Naive thymus-derived CD4-positive, alpha-beta T cell (primary cell): ENCODE measurements at regions of chr18 and their contacts with region 1.

Region 1: DNA sequence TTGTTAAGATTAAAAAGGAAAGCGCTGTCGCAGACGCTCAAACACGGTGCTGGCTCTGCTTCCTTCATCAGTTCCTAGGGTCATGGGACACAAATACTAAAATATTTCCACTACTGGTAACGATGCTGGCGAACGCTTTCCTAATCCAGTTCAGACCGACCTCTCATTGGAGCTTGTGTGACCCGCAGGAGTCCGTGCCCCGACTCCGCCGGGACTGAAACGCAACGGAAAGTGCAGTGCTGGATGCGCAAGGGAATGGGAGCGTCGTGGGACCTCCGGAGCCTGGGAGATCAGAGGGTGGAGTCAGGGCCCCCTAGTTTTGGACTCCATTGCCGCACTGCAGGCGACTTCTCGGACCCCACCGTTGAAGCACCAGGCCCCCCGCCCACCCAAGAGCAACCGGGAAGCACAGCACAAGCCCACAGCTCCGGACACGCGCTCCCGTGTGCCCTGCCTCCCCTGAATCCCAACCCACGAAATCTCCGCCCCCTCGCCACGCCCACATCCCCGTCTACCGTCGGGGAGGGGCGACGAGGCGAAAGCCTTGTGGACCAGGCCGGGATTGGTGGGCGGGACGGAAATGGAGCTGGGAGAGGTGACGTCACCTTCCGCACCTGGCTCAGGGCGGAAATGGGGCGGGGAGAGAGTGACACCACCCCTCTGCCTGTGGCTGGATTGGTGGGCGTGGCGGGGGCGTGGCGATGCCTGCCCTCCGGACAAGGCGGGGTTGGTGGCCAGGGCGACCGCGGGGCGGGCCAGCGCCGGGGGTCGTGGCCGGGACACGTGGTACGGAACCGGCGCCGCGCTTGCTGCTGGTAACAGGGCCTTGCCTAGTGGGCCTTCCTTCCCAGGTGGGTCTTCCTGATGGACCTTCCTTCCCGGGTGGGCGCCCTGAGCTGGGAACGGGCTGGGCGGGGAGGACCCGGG is at the start of gene CNDP2:
- DNase-seq: peak; percentile 93 to 100 (median 94)
- ATAC-seq: peak; percentile 89
- H3K4me3 ChIP-seq: peak within 1 kb of the TSS; percentile 75
- H3K4me3 Mint-ChIP-seq: peak within 1 kb of the TSS; percentile 79 to 98 (median 92)
- H3K27ac ChIP-seq: peak within 1 kb of the TSS; percentile 93
- H3K27ac Mint-ChIP-seq: peak within 1 kb of the TSS; percentile 95 to 100 (median 98)
- H3K4me1 ChIP-seq: peaks cover 33 to 43% of the 10 kb centered on the region in 2 donors
- H3K4me1 Mint-ChIP-seq: peaks cover 21 to 62% (median 49%) of the 10 kb centered on the region in 7 donors
- H3K27me3 ChIP-seq: no peaks in the 10 kb centered on the region
- H3K27me3 Mint-ChIP-seq: peaks cover 0 to 20% (median 0%) of the 10 kb centered on the region in 5 donors
- total RNA-seq, gene CNDP2: 112 to 169 (median 148) TPM

Region 2: DNA sequence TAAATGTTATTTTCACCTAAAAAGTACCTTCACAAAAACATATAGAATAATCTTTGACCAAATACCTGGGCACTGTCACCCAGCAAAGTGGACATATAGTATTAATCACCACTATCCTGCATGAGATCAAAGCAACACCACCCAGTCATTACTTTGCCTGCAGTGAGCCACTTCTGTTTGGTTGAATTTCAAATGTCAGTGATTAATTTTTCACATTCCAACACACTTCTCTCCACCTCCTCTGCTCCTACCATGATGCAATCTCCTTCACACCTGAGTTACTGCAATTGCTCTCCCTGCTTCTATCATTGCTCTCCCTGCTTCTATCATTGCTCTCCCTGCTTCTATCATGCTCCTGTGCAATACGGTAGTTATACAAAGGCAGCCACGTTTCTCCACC is 1522.0 kb before region 1 on chr18:
- CTCF ChIA-PET with region 1: no interaction called
- POLR2A ChIA-PET with region 1: no interaction called
- intact Hi-C with region 1: no loop called
- DNase-seq: no peak
- ATAC-seq: no peak
- H3K4me3 ChIP-seq: no peak overlapping the region
- H3K4me3 Mint-ChIP-seq: no peak overlapping the region
- H3K27ac ChIP-seq: no peak overlapping the region
- H3K27ac Mint-ChIP-seq: no peak overlapping the region
- H3K4me1 ChIP-seq: no peaks in the 10 kb centered on the region
- H3K4me1 Mint-ChIP-seq: no peaks in the 10 kb centered on the region
- H3K27me3 ChIP-seq: no peaks in the 10 kb centered on the region
- H3K27me3 Mint-ChIP-seq: no peaks in the 10 kb centered on the region

Region 3: DNA sequence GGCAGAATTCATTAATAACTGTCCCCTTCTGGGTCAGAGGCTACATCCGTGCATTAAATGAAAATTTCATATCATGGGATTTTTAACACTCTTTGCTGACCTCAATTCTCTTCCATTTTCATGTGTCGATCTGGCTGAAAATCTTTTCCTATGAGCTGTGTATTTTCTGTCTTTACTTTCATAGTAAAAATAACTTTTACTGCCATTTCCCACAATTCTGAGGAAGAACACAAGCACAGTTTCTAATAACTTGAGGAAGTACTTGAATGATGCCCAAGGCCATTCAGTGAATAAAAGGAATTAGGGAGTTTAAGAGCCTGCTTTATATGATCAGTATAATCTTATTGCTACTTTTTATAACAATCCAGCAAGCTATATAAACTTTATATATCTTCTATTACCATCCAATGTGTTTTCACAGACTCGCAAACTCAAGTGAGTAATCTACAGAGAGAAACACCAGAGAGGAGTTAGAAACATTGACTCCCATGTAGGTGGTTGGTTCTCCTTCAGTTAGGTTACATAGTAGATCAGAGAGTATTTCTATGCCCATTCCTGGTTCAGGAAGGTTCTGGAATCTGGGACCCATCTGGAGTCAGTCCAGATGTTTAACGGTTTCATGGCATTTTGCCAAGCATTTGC is 688.2 kb before region 1 on chr18:
- CTCF ChIA-PET with region 1: no interaction called
- POLR2A ChIA-PET with region 1: no interaction called
- intact Hi-C with region 1: no loop called
- DNase-seq: no peak
- ATAC-seq: no peak
- H3K4me3 ChIP-seq: no peak overlapping the region
- H3K4me3 Mint-ChIP-seq: no peak overlapping the region
- H3K27ac ChIP-seq: no peak overlapping the region
- H3K27ac Mint-ChIP-seq: no peak overlapping the region
- H3K4me1 ChIP-seq: no peaks in the 10 kb centered on the region
- H3K4me1 Mint-ChIP-seq: no peaks in the 10 kb centered on the region
- H3K27me3 ChIP-seq: no peaks in the 10 kb centered on the region
- H3K27me3 Mint-ChIP-seq: peaks cover 0 to 8% (median 0%) of the 10 kb centered on the region in 5 donors

Region 4: GRCh38 chr18:74063023-74063422 is 432.8 kb before region 1 on chr18:
- CTCF ChIA-PET with region 1: no interaction called
- POLR2A ChIA-PET with region 1: no interaction called
- intact Hi-C with region 1: loop called in 1 of 2 experiments (anchors 2 kb)
- DNase-seq: peak in 2 of 9 donors; percentile 17 to 48
- ATAC-seq: no peak
- H3K4me3 ChIP-seq: no peak overlapping the region
- H3K4me3 Mint-ChIP-seq: peak overlapping the region in 2 of 10 donors; percentile 18 to 21
- H3K27ac ChIP-seq: no peak overlapping the region
- H3K27ac Mint-ChIP-seq: peak overlapping the region in 6 of 9 donors; percentile 25 to 73 (median 56)
- H3K4me1 ChIP-seq: peaks cover 0 to 24% of the 10 kb centered on the region in 2 donors
- H3K4me1 Mint-ChIP-seq: peaks cover 0 to 47% (median 37%) of the 10 kb centered on the region in 7 donors
- H3K27me3 ChIP-seq: no peaks in the 10 kb centered on the region
- H3K27me3 Mint-ChIP-seq: peaks cover 0 to 23% (median 0%) of the 10 kb centered on the region in 5 donors

Region 5: GRCh38 chr18:74163019-74163660 is 332.7 kb before region 1 on chr18:
- CTCF ChIA-PET with region 1: no interaction called
- POLR2A ChIA-PET with region 1: no interaction called
- intact Hi-C with region 1: no loop called
- DNase-seq: no peak
- ATAC-seq: no peak
- H3K4me3 ChIP-seq: no peak overlapping the region
- H3K4me3 Mint-ChIP-seq: no peak overlapping the region
- H3K27ac ChIP-seq: no peak overlapping the region
- H3K27ac Mint-ChIP-seq: peak overlapping the region in 2 of 9 donors; percentile 20 to 38
- H3K4me1 ChIP-seq: no peaks in the 10 kb centered on the region
- H3K4me1 Mint-ChIP-seq: peaks cover 0 to 1% (median 0%) of the 10 kb centered on the region in 7 donors
- H3K27me3 ChIP-seq: no peaks in the 10 kb centered on the region
- H3K27me3 Mint-ChIP-seq: peaks cover 0 to 3% (median 0%) of the 10 kb centered on the region in 5 donors

Region 6: GRCh38 chr18:74196220-74197119 is 299.4 kb before region 1 on chr18:
- CTCF ChIA-PET with region 1: interaction called, 18 read pairs
- POLR2A ChIA-PET with region 1: no interaction called
- intact Hi-C with region 1: loop called (anchors 1 kb)
- DNase-seq: peak in 7 of 9 donors; percentile 51 to 80 (median 71)
- ATAC-seq: peak; percentile 95
- H3K4me3 ChIP-seq: peak overlapping the region; percentile 55
- H3K4me3 Mint-ChIP-seq: peak overlapping the region; percentile 63 to 90 (median 86)
- H3K27ac ChIP-seq: peak overlapping the region; percentile 63
- H3K27ac Mint-ChIP-seq: peak overlapping the region in 8 of 9 donors; percentile 51 to 90 (median 79)
- H3K4me1 ChIP-seq: no peaks in the 10 kb centered on the region
- H3K4me1 Mint-ChIP-seq: peaks cover 0 to 7% (median 0%) of the 10 kb centered on the region in 7 donors
- H3K27me3 ChIP-seq: no peaks in the 10 kb centered on the region
- H3K27me3 Mint-ChIP-seq: peaks cover 1 to 11% (median 2%) of the 10 kb centered on the region in 5 donors

Region 7: GRCh38 chr18:74342416-74343043 is 153.3 kb before region 1 on chr18:
- CTCF ChIA-PET with region 1: interaction called, 13 read pairs
- POLR2A ChIA-PET with region 1: interaction called, 3 read pairs
- intact Hi-C with region 1: no loop called
- DNase-seq: peak in 7 of 9 donors; percentile 11 to 59 (median 38)
- ATAC-seq: peak; percentile 49
- H3K4me3 ChIP-seq: no peak overlapping the region
- H3K4me3 Mint-ChIP-seq: no peak overlapping the region
- H3K27ac ChIP-seq: no peak overlapping the region
- H3K27ac Mint-ChIP-seq: no peak overlapping the region
- H3K4me1 ChIP-seq: no peaks in the 10 kb centered on the region
- H3K4me1 Mint-ChIP-seq: no peaks in the 10 kb centered on the region
- H3K27me3 ChIP-seq: no peaks in the 10 kb centered on the region
- H3K27me3 Mint-ChIP-seq: peaks cover 2 to 39% (median 4%) of the 10 kb centered on the region in 5 donors

Region 8: GRCh38 chr18:74378179-74378682 is 117.6 kb before region 1 on chr18:
- CTCF ChIA-PET with region 1: interaction called, 17 read pairs
- POLR2A ChIA-PET with region 1: interaction called, 30 read pairs
- intact Hi-C with region 1: loop called (anchors 1 kb)
- DNase-seq: peak in 7 of 9 donors; percentile 48 to 85 (median 72)
- ATAC-seq: peak; percentile 65
- H3K4me3 ChIP-seq: no peak overlapping the region
- H3K4me3 Mint-ChIP-seq: peak overlapping the region; percentile 61 to 84 (median 78)
- H3K27ac ChIP-seq: peak overlapping the region; percentile 53
- H3K27ac Mint-ChIP-seq: peak overlapping the region; percentile 91 to 98 (median 93)
- H3K4me1 ChIP-seq: peaks cover 10 to 47% of the 10 kb centered on the region in 2 donors
- H3K4me1 Mint-ChIP-seq: peaks cover 28 to 67% (median 62%) of the 10 kb centered on the region in 7 donors
- H3K27me3 ChIP-seq: no peaks in the 10 kb centered on the region
- H3K27me3 Mint-ChIP-seq: peaks cover 0 to 6% (median 0%) of the 10 kb centered on the region in 5 donors

Region 9: DNA sequence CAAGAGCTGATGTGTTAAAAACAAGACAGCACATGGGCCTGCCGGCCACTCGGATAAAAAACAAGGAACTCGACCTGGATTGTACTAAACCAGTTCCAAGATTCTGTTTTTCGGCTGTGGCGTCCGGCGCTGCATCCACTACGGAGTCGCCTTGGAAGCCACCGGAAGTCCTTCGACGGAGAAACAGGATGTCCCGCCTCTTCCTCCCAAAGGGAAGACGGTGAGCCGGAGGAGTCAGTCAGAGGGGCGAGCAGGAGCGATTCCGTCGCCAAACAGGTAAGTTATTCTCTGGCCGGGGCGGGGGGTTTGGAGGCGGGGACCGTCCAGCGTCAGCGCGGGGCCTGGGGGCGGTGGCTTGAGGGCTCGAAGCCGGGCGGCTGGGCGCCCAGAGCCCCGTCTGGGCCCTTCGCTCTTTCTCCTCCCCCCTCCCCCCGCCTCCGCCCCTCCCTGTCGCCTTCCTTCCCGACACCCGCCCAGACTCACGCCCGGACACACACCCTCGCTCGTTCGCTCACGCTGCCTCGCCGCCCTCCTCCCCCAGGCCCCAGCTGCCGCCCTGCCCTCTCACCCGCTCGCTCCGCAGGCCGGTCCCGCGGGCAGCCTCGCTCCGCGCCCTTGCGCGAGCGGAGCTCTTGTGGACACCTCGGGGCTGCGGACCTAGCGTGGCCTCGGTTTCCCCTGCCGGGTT is 102.0 kb after region 1 on chr18 and contains the start of gene ZNF407:
- CTCF ChIA-PET with region 1: no interaction called
- POLR2A ChIA-PET with region 1: interaction called, 8 read pairs
- intact Hi-C with region 1: loop called (anchors 1 kb)
- DNase-seq: peak; percentile 77 to 94 (median 90)
- ATAC-seq: peak; percentile 84
- H3K4me3 ChIP-seq: peak within 1 kb of the TSS; percentile 100
- H3K4me3 Mint-ChIP-seq: peak within 1 kb of the TSS; percentile 89 to 96 (median 95)
- H3K27ac ChIP-seq: peak within 1 kb of the TSS; percentile 88
- H3K27ac Mint-ChIP-seq: peak within 1 kb of the TSS; percentile 95 to 99 (median 98)
- H3K4me1 ChIP-seq: peaks cover 26 to 27% of the 10 kb centered on the region in 2 donors
- H3K4me1 Mint-ChIP-seq: peaks cover 33 to 74% (median 61%) of the 10 kb centered on the region in 7 donors
- H3K27me3 ChIP-seq: no peaks in the 10 kb centered on the region
- H3K27me3 Mint-ChIP-seq: no peaks in the 10 kb centered on the region
- total RNA-seq, gene ZNF407: 23.1 to 31.3 (median 29.7) TPM